Natural killer cell (primary cell): ENCODE measurements at regions of chr12 and their contacts with region 1.

Region 1: DNA sequence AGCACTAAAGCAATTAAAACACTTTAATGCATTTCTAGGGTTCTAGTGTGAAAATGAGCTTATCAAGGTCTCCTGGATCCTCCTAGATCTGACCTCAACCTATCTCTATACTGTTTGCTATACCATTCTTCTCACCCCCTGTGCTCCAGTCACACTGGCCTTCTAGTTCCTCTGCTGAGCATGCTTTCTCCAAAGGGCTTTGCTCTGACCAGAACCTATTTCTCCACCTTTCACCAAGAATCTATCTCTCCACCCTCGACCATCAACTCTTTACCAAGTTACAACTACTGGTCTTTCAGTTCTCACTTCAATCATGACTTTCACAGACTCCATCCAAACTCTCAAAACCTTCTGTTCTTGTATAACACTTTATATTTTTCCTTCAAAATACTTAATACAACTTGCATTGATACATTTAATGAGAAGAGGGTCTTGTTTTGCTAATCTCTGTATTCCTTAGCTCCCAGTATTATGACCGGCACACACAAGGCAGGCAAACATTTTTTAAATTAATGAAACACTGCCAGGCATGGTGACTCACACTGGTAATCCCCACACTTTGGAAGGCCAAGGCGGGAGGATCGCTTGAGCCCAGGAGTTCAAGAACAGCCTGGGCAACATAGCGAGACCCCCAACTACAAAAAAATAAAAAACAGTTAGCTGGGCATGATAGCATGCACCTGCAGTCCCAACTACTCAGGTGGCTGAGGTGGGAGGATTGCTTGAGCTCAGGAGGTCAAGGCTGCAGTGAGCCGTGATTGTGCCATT is 22.8 kb downstream of the PPP1R12A start:
- DNase-seq: no peak
- ATAC-seq: no peak
- H3K4me3 ChIP-seq: no peak overlapping the region
- H3K4me3 Mint-ChIP-seq: no peak overlapping the region
- H3K27ac ChIP-seq: no peak overlapping the region
- H3K27ac Mint-ChIP-seq: peak overlapping the region; percentile 0 to 37
- H3K4me1 ChIP-seq: peaks cover 7% of the 10 kb centered on the region
- H3K4me1 Mint-ChIP-seq: peaks cover 60 to 64% of the 10 kb centered on the region in 2 donors
- H3K27me3 ChIP-seq: no peaks in the 10 kb centered on the region
- H3K27me3 Mint-ChIP-seq: no peaks in the 10 kb centered on the region
- CTCF ChIP-seq: no peak

Region 2: DNA sequence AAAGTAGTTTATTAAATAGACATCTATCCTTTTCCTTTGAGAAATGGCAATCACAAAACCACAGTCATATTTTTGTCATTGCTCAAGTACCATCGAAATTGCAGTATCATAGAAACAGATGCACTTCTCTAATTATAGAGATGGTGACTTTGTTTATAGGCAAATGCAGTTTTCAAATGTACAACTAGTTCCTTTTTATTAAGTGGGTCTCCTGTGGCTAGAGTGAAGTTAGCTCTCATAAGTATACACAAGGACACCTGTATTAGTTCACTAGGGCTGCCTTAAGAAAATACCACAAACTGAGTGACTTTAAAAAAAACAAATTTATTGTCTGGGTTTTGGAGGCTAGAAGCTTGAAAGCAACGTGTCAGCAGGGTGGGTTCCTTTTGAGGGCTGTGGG is 250.1 kb after region 1 on chr12:
- intact Hi-C with region 1: loop called (anchors 10 kb)
- DNase-seq: no peak
- ATAC-seq: no peak
- H3K4me3 ChIP-seq: no peak overlapping the region
- H3K4me3 Mint-ChIP-seq: no peak overlapping the region
- H3K27ac ChIP-seq: no peak overlapping the region
- H3K27ac Mint-ChIP-seq: no peak overlapping the region
- H3K4me1 ChIP-seq: peaks cover 3% of the 10 kb centered on the region
- H3K4me1 Mint-ChIP-seq: peaks cover 20 to 30% of the 10 kb centered on the region in 2 donors
- H3K27me3 ChIP-seq: no peaks in the 10 kb centered on the region
- H3K27me3 Mint-ChIP-seq: no peaks in the 10 kb centered on the region
- CTCF ChIP-seq: no peak